Gastrocnemius medialis (tissue), 4 donors: ENCODE measurements at regions of chr14 and their contacts with region 1.

Region 1: GRCh38 chr14:67583711-67584644 is 16.1 kb downstream of the PIGH start:
- DNase-seq: no peak
- ATAC-seq: peak; percentile 73 to 76
- H3K4me3 ChIP-seq: no peak overlapping the region
- H3K27ac ChIP-seq: no peak overlapping the region
- H3K4me1 ChIP-seq: no peaks in the 10 kb centered on the region
- H3K27me3 ChIP-seq: no peaks in the 10 kb centered on the region
- CTCF ChIP-seq: peak; percentile 46 to 66 (median 62)
- POLR2A ChIP-seq: no peak

Region 2: GRCh38 chr14:67566908-67567307 is 17.1 kb before region 1 on chr14:
- in situ Hi-C with region 1: no loop called
- intact Hi-C with region 1: no loop called
- DNase-seq: peak; percentile 47 to 65
- ATAC-seq: peak; percentile 67 to 77
- H3K4me3 ChIP-seq: no peak overlapping the region
- H3K27ac ChIP-seq: peak overlapping the region in 2 of 4 donors; percentile 9 to 64
- H3K4me1 ChIP-seq: peaks cover 7 to 10% of the 10 kb centered on the region in 2 donors
- H3K27me3 ChIP-seq: no peaks in the 10 kb centered on the region
- CTCF ChIP-seq: no peak
- POLR2A ChIP-seq: no peak

Region 3: GRCh38 chr14:67704484-67705089 is 120.6 kb after region 1 on chr14:
- in situ Hi-C with region 1: loop called in 3 of 4 experiments (anchors 5 to 10 kb)
- intact Hi-C with region 1: loop called (anchors 1 kb)
- DNase-seq: no peak
- ATAC-seq: peak; percentile 69 to 89
- H3K4me3 ChIP-seq: no peak overlapping the region
- H3K27ac ChIP-seq: no peak overlapping the region
- H3K4me1 ChIP-seq: no peaks in the 10 kb centered on the region
- H3K27me3 ChIP-seq: no peaks in the 10 kb centered on the region
- CTCF ChIP-seq: peak; percentile 61 to 79 (median 68)
- POLR2A ChIP-seq: no peak